A549 (cell line): ENCODE measurements at regions of chr1 and their contacts with region 1.

Region 1: GRCh38 chr1:212749821-212750535 is 41.6 kb downstream of the NSL1 start:
- DNase-seq: peak; percentile 64 to 77
- ATAC-seq: peak; percentile 76 to 91
- H3K4me3 ChIP-seq: no peak overlapping the region
- H3K27ac ChIP-seq: peak overlapping the region in 1 of 2 experiments; percentile 59; a peak in 3 of 6 replicates
- H3K4me1 ChIP-seq: peaks cover 12% of the 10 kb centered on the region
- CTCF ChIP-seq: peak; percentile 85
- EP300 ChIP-seq: no peak
- POLR2A ChIP-seq: no peak
- RAD21 ChIP-seq: peak; percentile 61 to 64

Region 2: GRCh38 chr1:212566522-212567479 is 183.2 kb before region 1 on chr1:
- CTCF ChIA-PET with region 1: no interaction called
- POLR2A ChIA-PET with region 1: no interaction called
- DNase-seq: peak; percentile 66 to 72
- ATAC-seq: peak; percentile 80 to 89
- H3K4me3 ChIP-seq: peak overlapping the region; percentile 52
- H3K27ac ChIP-seq: peak overlapping the region; percentile 78 to 84
- H3K4me1 ChIP-seq: peaks cover 15% of the 10 kb centered on the region
- CTCF ChIP-seq: no peak
- EP300 ChIP-seq: no peak
- POLR2A ChIP-seq: no peak
- RAD21 ChIP-seq: no peak

Region 3: DNA sequence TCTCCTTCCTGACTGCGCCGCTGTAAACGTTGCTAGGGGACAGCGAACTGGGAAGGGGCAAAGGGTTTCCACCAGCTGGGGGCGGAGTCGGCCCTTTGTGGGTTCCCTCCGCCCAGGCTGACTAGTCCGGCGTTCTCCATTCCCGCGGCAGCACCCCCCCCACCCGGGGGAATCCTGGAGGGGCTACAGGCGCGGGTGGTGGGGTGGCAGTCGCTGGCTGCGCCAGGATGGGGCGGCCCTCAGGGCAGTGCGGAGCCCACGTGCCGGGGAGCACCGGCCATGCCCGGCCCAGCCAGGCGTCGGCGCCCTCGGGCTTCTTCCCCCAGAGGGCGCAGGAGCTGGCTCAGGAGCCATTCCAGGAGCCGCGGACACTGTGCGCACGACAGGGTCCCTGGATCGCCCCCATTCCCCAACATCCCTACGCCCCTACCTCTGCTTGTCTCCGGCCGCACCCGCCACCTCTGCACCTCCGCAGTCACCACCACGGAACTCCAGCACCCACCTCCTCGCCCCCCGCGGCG is 50.8 kb before region 1 on chr1:
- CTCF ChIA-PET with region 1: interaction called, 13 read pairs
- POLR2A ChIA-PET with region 1: no interaction called
- DNase-seq: peak; percentile 66 to 72
- ATAC-seq: peak; percentile 85 to 88
- H3K4me3 ChIP-seq: peak overlapping the region; percentile 95
- H3K27ac ChIP-seq: peak overlapping the region; percentile 87 to 90
- H3K4me1 ChIP-seq: peaks cover 16% of the 10 kb centered on the region; the same call in 2 of the 3 replicates
- CTCF ChIP-seq: peak; percentile 84
- EP300 ChIP-seq: no peak
- POLR2A ChIP-seq: 0 out of 2 replicates have a peak, but pooled peaks have one; percentile 17
- RAD21 ChIP-seq: peak; percentile 33 to 71; a peak in 4 of 5 replicates

Region 4: DNA sequence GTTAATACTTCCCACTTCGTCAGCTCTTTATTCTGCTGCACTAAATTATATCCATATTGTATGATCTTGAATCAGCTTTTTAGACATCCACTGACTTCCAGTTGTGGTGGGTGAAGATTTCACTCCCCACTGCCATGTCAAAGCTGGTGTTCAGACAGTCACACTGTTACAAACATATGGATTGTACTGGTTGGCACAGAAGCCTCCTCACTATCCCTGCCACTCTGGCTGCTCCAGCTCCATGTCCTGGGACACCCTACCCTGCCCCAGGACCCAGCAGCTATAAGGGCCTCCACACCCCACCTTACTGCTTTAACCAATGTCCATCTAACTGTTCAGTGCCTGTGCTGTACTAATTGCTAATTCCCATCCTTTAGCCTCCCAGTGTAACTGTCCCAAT is 18.3 kb before region 1 on chr1:
- CTCF ChIA-PET with region 1: interaction called, 11 read pairs
- POLR2A ChIA-PET with region 1: no interaction called
- DNase-seq: no peak
- ATAC-seq: no peak; a peak in 1 of 6 replicates
- H3K4me3 ChIP-seq: no peak overlapping the region
- H3K27ac ChIP-seq: no peak overlapping the region
- H3K4me1 ChIP-seq: peaks cover 18% of the 10 kb centered on the region
- CTCF ChIP-seq: no peak
- EP300 ChIP-seq: no peak
- POLR2A ChIP-seq: no peak
- RAD21 ChIP-seq: no peak

Region 5: GRCh38 chr1:212769459-212770167 is 19.6 kb after region 1 on chr1:
- CTCF ChIA-PET with region 1: interaction called, 11 read pairs
- POLR2A ChIA-PET with region 1: no interaction called
- DNase-seq: peak in 1 of 2 experiments; percentile 8
- ATAC-seq: no peak
- H3K4me3 ChIP-seq: no peak overlapping the region
- H3K27ac ChIP-seq: no peak overlapping the region
- H3K4me1 ChIP-seq: peaks cover 9% of the 10 kb centered on the region
- CTCF ChIP-seq: no peak
- EP300 ChIP-seq: no peak
- POLR2A ChIP-seq: no peak
- RAD21 ChIP-seq: no peak

Region 6: GRCh38 chr1:212782422-212783154 is 32.6 kb after region 1 on chr1:
- CTCF ChIA-PET with region 1: interaction called, 13 read pairs
- POLR2A ChIA-PET with region 1: no interaction called
- DNase-seq: peak in 1 of 2 experiments; percentile 48
- ATAC-seq: peak; percentile 78 to 80
- H3K4me3 ChIP-seq: no peak overlapping the region
- H3K27ac ChIP-seq: no peak overlapping the region
- H3K4me1 ChIP-seq: no peaks in the 10 kb centered on the region
- CTCF ChIP-seq: peak; percentile 83
- EP300 ChIP-seq: no peak
- POLR2A ChIP-seq: no peak
- RAD21 ChIP-seq: peak; percentile 78 to 85